ENCODE measurements at regions of chr10 and their contacts with region 1.

Region 1: GRCh38 chr10:27155066-27155754 is at the start of gene MASTL:
- DNase-seq: peak; percentile 95
- H3K4me3 Mint-ChIP-seq: peak within 1 kb of the TSS; percentile 94
- H3K27ac Mint-ChIP-seq: peak within 1 kb of the TSS; percentile 100
- H3K4me1 Mint-ChIP-seq: peaks cover 46% of the 10 kb centered on the region
- H3K27me3 Mint-ChIP-seq: no peaks in the 10 kb centered on the region
- total RNA-seq, gene MASTL: 50.7 to 51.3 TPM

Region 2: GRCh38 chr10:26437637-26438461 is 717.4 kb before region 1 on chr10 and contains the start of gene APBB1IP:
- CTCF ChIA-PET with region 1: no interaction called
- intact Hi-C with region 1: loop called (anchors 5 kb)
- DNase-seq: peak; percentile 58
- H3K4me3 Mint-ChIP-seq: peak within 1 kb of the TSS; percentile 81
- H3K27ac Mint-ChIP-seq: peak within 1 kb of the TSS; percentile 98
- H3K4me1 Mint-ChIP-seq: peaks cover 50% of the 10 kb centered on the region
- H3K27me3 Mint-ChIP-seq: no peaks in the 10 kb centered on the region
- total RNA-seq, gene APBB1IP: 29.4 to 30.9 TPM

Region 3: GRCh38 chr10:26697163-26697921 is 457.9 kb before region 1 on chr10 and contains the start of gene PDSS1:
- CTCF ChIA-PET with region 1: no interaction called
- intact Hi-C with region 1: loop called (anchors 1 kb)
- DNase-seq: peak; percentile 72
- H3K4me3 Mint-ChIP-seq: peak within 1 kb of the TSS; percentile 96
- H3K27ac Mint-ChIP-seq: peak within 1 kb of the TSS; percentile 89
- H3K4me1 Mint-ChIP-seq: peaks cover 39% of the 10 kb centered on the region
- H3K27me3 Mint-ChIP-seq: no peaks in the 10 kb centered on the region
- total RNA-seq, gene PDSS1: 14.5 to 16.0 TPM

Region 4: GRCh38 chr10:26737730-26738129 is 417.5 kb before region 1 on chr10:
- CTCF ChIA-PET with region 1: no interaction called
- intact Hi-C with region 1: loop called (anchors 1 kb)
- DNase-seq: peak; percentile 75
- H3K4me3 Mint-ChIP-seq: no peak overlapping the region
- H3K27ac Mint-ChIP-seq: peak overlapping the region; percentile 88
- H3K4me1 Mint-ChIP-seq: peaks cover 36% of the 10 kb centered on the region
- H3K27me3 Mint-ChIP-seq: no peaks in the 10 kb centered on the region

Region 5: DNA sequence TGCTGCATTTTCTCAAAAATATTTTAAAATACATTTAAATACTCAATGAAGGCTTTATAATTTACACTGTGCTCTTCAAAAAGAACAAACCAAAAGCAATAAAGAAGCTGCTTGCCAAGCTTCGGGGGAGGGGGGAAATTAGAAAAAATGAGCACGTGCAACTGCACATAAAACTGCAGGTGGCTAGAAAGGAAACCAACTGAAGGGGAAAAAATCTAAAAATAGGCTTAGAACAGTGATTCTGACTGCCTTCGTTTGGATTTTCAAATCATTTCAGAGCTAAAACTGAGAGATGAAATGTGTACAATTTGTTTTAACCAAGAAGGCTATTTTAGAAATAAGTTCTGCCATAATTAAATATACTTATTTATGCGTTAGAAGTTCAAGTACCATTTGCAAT is 355.9 kb before region 1 on chr10:
- CTCF ChIA-PET with region 1: no interaction called
- intact Hi-C with region 1: no loop called
- DNase-seq: peak; percentile 44
- H3K4me3 Mint-ChIP-seq: no peak overlapping the region
- H3K27ac Mint-ChIP-seq: no peak overlapping the region
- H3K4me1 Mint-ChIP-seq: peaks cover 52% of the 10 kb centered on the region
- H3K27me3 Mint-ChIP-seq: no peaks in the 10 kb centered on the region

Region 6: DNA sequence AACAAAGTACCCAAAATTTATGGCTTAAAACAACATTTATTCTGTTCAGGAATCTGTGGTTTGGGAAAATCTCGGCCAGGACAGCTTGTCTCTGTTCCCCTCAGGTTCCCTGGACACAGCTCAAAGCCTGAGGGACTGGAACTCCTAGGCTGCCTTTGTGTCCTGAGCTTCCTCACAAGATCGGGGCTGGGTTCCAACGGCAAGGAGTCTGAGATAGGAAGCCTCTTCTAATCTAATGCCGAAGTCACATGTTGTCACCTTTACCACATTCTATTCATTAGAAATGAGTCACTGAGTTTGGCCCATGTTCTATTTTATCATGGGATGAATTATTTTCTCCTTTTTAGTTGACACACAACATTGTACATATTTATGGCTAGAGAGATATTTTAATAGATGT is 135.4 kb before region 1 on chr10:
- CTCF ChIA-PET with region 1: no interaction called
- intact Hi-C with region 1: loop called (anchors 5 kb)
- DNase-seq: no peak
- H3K4me3 Mint-ChIP-seq: no peak overlapping the region
- H3K27ac Mint-ChIP-seq: no peak overlapping the region
- H3K4me1 Mint-ChIP-seq: peaks cover 10% of the 10 kb centered on the region
- H3K27me3 Mint-ChIP-seq: no peaks in the 10 kb centered on the region

Region 7: GRCh38 chr10:27169849-27170248 is 14.6 kb after region 1 on chr10:
- CTCF ChIA-PET with region 1: interaction called, 3 read pairs
- intact Hi-C with region 1: loop called (anchors 1 kb)
- DNase-seq: no peak
- H3K4me3 Mint-ChIP-seq: no peak overlapping the region
- H3K27ac Mint-ChIP-seq: no peak overlapping the region
- H3K4me1 Mint-ChIP-seq: peaks cover 6% of the 10 kb centered on the region
- H3K27me3 Mint-ChIP-seq: no peaks in the 10 kb centered on the region

Region 8: DNA sequence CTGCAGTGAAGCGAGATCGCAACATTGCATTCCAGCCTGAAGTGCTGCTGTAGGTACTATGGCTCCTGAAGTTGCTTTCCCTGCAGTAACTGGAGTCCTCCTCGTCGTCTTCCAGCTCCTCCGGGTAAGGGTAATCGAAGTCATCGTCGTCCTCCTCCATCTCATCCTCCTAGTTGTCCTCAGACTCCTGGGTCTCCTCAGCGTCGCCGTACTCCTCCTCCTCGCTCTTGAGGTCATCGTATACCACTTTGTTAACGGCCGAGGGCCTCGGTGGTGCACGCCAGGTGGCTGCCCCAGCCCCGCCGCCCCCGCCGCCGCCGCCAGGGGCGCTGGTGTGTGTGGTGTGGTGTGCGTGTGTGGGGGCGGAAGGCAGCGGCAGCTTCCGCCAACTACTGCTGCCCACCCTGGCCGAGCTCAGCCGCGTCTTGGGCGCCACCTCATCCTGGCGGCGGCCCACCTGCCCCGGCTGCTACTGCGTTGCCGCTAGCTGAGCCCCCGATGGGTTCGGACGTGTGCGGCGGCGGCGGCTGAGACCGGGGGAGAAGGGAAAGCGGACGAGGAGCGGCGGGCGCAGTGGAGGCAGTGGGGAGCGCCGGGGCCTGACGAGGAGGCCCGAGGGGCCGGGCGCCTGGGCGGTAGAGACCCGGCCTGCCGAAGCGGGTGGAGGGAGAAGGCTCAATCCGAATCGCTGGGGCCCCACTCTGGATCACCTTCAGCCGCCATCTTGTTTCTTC is 97.2 kb after region 1 on chr10:
- CTCF ChIA-PET with region 1: no interaction called
- intact Hi-C with region 1: no loop called
- DNase-seq: peak; percentile 80
- H3K4me3 Mint-ChIP-seq: peak overlapping the region; percentile 73
- H3K27ac Mint-ChIP-seq: peak overlapping the region; percentile 78
- H3K4me1 Mint-ChIP-seq: peaks cover 10% of the 10 kb centered on the region
- H3K27me3 Mint-ChIP-seq: peaks cover 5% of the 10 kb centered on the region

Measured in activated naive CD4-positive, alpha-beta T cell treated with anti-CD3 and anti-CD28 coated beads for 36 hours (primary cell).